GM12878 (cell line): ENCODE measurements at regions of chr1 and their contacts with region 1.

Region 1: GRCh38 chr1:217660353-217661062 is 29.4 kb downstream of the SPATA17 start:
- DNase-seq: no peak
- ATAC-seq: peak; percentile 53; the same call in 2 of the 3 replicates
- H3K4me3 ChIP-seq: no peak overlapping the region
- H3K27ac ChIP-seq: no peak overlapping the region
- H3K4me1 ChIP-seq: no peaks in the 10 kb centered on the region
- H3K27me3 ChIP-seq: no peaks in the 10 kb centered on the region
- CTCF ChIP-seq: peak; percentile 33 to 58 (median 48); a peak in 5 of 6 replicates
- EP300 ChIP-seq: no peak
- POLR2A ChIP-seq: no peak
- RAD21 ChIP-seq: peak; percentile 81

Region 2: DNA sequence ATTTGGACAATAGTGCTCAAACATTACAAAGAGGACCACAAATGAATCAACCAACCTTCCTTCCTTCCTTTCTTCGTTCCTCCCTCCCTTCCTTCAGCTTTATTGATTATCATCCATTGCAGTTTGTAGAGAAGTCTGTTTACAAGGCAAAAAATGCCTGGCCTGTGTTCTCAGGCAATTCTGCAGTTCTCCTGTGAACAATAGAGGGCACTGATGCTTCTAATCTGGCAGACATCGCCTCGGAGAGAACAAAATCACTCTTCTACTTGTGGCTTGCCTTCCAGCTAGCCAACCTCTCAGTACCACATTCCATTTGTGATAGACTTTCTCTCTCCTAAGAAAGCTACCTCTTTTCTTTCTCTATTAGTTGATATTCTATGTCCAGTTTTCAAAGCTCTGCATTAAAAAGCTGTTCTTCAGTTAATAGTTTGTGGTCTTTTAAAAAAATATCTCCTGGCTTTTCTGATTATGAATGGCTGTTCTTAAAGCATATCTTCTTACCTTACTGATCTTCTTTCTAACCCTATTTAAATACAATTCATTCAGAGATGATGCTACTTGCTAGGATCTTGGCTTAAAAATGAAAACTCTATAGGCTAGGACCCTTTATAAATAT is 910.4 kb before region 1 on chr1:
- CTCF ChIA-PET with region 1: interaction called, 10 read pairs
- POLR2A ChIA-PET with region 1: no interaction called
- RAD21 ChIA-PET with region 1: no interaction called
- SMC1A ChIA-PET with region 1: interaction called, 7 read pairs
- in situ Hi-C with region 1: no loop called
- intact Hi-C with region 1: no loop called
- DNase-seq: no peak
- ATAC-seq: peak; percentile 64
- H3K4me3 ChIP-seq: no peak overlapping the region
- H3K27ac ChIP-seq: no peak overlapping the region
- H3K4me1 ChIP-seq: no peaks in the 10 kb centered on the region
- H3K27me3 ChIP-seq: no peaks in the 10 kb centered on the region
- CTCF ChIP-seq: peak; percentile 44 to 56 (median 54); a peak in 5 of 6 replicates
- EP300 ChIP-seq: no peak
- POLR2A ChIP-seq: no peak
- RAD21 ChIP-seq: peak; percentile 67

Region 3: DNA sequence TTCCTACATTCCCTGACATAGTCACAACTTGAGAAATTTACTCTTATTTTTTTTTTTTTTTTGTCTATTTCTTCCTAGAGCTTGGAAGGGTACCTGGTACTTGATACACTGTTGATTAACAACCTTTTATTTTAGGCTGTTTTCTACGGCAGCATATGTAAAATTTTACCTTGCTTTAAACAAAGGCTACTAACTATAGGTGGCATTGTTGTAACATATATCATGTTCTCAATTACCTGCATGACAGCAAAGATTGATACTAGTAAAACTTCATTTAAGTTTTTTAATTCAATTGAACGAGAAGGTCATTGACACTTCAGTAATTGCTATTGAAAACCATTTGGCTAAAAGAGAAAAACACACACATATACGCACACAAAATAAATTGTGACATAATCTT is 699.0 kb before region 1 on chr1:
- CTCF ChIA-PET with region 1: interaction called, 7 read pairs
- POLR2A ChIA-PET with region 1: no interaction called
- RAD21 ChIA-PET with region 1: no interaction called
- SMC1A ChIA-PET with region 1: no interaction called
- in situ Hi-C with region 1: no loop called
- intact Hi-C with region 1: loop called (anchors 5 kb)
- DNase-seq: no peak
- ATAC-seq: no peak
- H3K4me3 ChIP-seq: no peak overlapping the region
- H3K27ac ChIP-seq: no peak overlapping the region
- H3K4me1 ChIP-seq: no peaks in the 10 kb centered on the region
- H3K27me3 ChIP-seq: no peaks in the 10 kb centered on the region; a peak in 1 of 4 replicates
- CTCF ChIP-seq: peak in 1 of 3 experiments; percentile 37; a peak in 2 of 6 replicates
- EP300 ChIP-seq: no peak
- POLR2A ChIP-seq: no peak
- RAD21 ChIP-seq: 0 out of 2 replicates have a peak, but pooled peaks have one; percentile 12

Region 4: GRCh38 chr1:217048104-217048721 is 612.3 kb before region 1 on chr1:
- CTCF ChIA-PET with region 1: interaction called, 4 read pairs
- POLR2A ChIA-PET with region 1: no interaction called
- RAD21 ChIA-PET with region 1: no interaction called
- SMC1A ChIA-PET with region 1: no interaction called
- in situ Hi-C with region 1: no loop called
- intact Hi-C with region 1: loop called (anchors 10 kb)
- DNase-seq: no peak
- ATAC-seq: peak; percentile 82
- H3K4me3 ChIP-seq: no peak overlapping the region
- H3K27ac ChIP-seq: no peak overlapping the region
- H3K4me1 ChIP-seq: no peaks in the 10 kb centered on the region
- H3K27me3 ChIP-seq: no peaks in the 10 kb centered on the region
- CTCF ChIP-seq: peak; percentile 32 to 44 (median 38); a peak in 4 of 6 replicates
- EP300 ChIP-seq: no peak
- POLR2A ChIP-seq: no peak
- RAD21 ChIP-seq: peak; percentile 30; the same call in 1 of the 2 replicates

Region 5: DNA sequence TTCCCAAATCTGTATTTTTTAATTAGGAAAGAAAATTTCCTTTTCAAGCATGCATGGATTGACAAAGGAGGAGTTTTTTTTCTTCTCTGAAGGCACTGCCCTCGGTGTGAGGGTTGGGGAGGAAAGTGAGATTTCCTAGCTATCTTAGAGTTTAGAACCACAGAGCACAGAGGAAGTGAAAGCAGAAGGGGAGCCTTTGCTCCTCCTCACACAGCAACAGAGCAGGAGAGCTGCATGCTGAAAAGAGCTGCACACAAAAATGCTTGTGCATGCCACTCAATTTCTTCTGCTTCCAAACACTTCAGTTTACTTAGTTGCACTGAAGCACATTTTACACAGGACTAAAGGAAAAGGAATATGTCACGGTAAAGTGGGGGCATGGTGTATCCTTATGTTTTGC is 337.7 kb before region 1 on chr1:
- CTCF ChIA-PET with region 1: no interaction called
- POLR2A ChIA-PET with region 1: no interaction called
- RAD21 ChIA-PET with region 1: no interaction called
- SMC1A ChIA-PET with region 1: no interaction called
- in situ Hi-C with region 1: no loop called
- intact Hi-C with region 1: loop called (anchors 10 kb)
- DNase-seq: peak; percentile 28
- ATAC-seq: peak; percentile 99
- H3K4me3 ChIP-seq: no peak overlapping the region
- H3K27ac ChIP-seq: no peak overlapping the region
- H3K4me1 ChIP-seq: peaks cover 11% of the 10 kb centered on the region
- H3K27me3 ChIP-seq: no peaks in the 10 kb centered on the region
- CTCF ChIP-seq: no peak
- EP300 ChIP-seq: peak in 1 of 2 experiments; percentile 39; a peak in 1 of 4 replicates
- POLR2A ChIP-seq: no peak
- RAD21 ChIP-seq: no peak